Posterior cingulate gyrus (tissue), 11 donors: ENCODE measurements at regions of chr20 and their contacts with region 1.

Region 1: DNA sequence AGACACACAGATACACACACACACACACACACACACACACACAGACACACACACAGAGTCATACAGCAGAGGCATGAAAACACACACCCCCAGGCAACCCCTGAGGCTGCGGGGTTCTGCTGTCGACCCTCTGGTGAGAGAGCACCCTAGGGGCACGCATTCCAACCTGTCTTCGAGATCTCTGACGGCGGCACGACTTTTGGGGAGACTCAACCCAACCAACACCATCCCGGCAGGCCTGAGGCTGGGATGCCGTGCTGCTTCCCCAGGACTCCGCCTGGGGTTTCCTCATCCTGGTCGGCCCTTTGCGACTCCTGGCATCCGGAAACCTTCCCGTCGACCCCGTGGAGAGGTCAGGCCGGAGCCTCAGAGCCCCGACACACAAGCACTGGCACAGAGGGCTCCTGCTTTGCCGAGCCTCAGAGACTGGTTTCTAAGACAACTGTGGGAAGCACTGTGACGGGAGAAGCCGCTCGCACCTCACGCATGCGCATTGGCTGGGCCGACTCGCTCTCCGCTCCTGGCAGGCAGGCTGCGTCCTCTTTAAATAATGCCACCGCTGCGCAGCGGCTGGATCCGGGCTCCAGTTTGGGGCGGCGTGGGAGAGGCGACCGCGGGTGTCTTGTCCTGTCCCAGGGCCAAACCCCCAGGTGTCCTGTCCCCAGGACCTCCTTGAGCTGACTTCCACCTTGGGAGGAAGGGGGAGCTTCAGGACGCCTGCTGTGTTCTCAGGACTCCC is 168.9 kb upstream of the ZNF337 start:
- DNase-seq: peak; percentile 75 to 98 (median 88)

Region 2: DNA sequence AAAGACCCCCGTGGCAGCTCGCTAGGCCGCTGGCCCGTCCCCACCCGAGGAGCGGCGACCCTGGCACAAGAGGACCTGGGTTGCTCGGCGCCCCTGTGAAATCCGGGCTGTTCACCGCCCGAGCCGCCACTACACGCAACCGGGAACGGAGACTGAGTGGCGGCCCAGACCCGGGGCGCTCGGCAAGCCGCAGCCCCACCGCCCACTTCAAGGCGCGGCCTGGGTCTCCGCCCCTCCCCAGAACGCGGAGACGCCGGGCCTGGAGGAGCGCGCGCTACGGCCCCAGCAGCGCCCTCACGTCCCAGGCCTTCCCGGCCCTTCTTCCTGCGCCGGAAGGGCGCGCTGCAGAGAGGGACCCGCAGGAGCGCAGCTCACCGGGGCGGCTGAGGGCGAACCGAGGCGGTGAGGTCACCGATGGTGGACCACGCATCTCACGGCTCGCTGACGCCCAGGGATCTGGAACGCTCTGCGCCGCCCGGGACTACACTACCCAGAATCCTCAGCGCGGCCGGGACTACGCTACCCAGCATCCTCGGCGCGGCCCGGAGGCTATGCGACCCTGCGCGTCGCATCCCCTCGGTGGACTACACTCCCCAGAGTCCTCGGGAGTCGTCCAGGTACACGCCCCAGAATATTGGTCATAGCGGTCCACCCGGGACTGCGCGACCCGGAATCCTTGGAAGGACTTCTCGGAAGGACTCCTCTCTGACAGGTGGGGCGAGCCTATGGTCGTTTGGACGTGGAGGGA is 169.0 kb before region 1 on chr20 and contains the start of gene ZNF337:
- intact Hi-C with region 1: loop called (anchors 5 kb)
- DNase-seq: peak; percentile 91 to 99 (median 95)

Region 3: GRCh38 chr20:25989196-25989595 is 123.6 kb after region 1 on chr20:
- intact Hi-C with region 1: no loop called
- DNase-seq: no peak